GM12878 (cell line): ENCODE measurements at regions of chr3 and their contacts with region 1.

Region 1: DNA sequence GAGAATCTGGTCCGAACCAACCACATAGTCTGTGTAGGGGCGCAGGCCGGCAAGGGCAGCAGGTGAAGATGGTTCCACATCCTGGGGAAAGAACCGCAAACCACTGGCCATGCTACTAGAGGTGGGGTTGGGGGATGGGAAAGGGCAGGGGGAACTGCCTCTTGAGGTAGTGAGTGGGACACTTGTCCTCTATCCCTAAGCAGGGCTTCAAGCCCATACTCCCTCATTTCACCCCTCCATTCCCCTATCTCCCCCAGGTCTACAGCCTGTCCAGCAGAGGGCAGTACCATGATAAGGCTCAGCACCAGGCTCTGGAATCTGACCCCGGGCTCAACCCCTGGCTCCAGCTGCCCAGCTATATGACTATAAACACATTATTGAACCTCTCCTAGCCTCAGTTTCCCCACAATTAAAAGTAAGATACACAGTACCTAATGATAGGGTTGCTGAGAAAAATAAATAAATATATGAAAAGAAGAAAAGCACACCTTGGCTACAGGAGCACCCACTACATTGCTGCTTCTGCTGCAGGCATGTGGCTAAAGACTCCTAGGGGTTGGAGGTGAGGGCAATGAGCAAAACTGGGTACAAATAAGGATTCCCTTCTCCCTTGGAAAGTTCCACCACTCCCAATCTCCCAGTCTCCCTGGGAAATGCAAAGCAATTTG is 6.3 kb downstream of the GORASP1 start:
- DNase-seq: no peak
- ATAC-seq: peak; percentile 89
- H3K4me3 ChIP-seq: no peak overlapping the region
- H3K27ac ChIP-seq: no peak overlapping the region
- H3K4me1 ChIP-seq: peaks cover 5% of the 10 kb centered on the region
- H3K27me3 ChIP-seq: no peaks in the 10 kb centered on the region
- CTCF ChIP-seq: peak; percentile 72 to 84 (median 83)
- EP300 ChIP-seq: no peak
- POLR2A ChIP-seq: no peak
- RAD21 ChIP-seq: peak; percentile 85

Region 2: GRCh38 chr3:38853011-38853410 is 248.1 kb before region 1 on chr3:
- CTCF ChIA-PET with region 1: no interaction called
- POLR2A ChIA-PET with region 1: no interaction called
- RAD21 ChIA-PET with region 1: no interaction called
- SMC1A ChIA-PET with region 1: no interaction called
- in situ Hi-C with region 1: no loop called
- intact Hi-C with region 1: no loop called
- DNase-seq: no peak
- ATAC-seq: no peak
- H3K4me3 ChIP-seq: no peak overlapping the region
- H3K27ac ChIP-seq: no peak overlapping the region
- H3K4me1 ChIP-seq: no peaks in the 10 kb centered on the region
- H3K27me3 ChIP-seq: no peaks in the 10 kb centered on the region
- CTCF ChIP-seq: no peak
- EP300 ChIP-seq: no peak
- POLR2A ChIP-seq: no peak
- RAD21 ChIP-seq: no peak

Region 3: DNA sequence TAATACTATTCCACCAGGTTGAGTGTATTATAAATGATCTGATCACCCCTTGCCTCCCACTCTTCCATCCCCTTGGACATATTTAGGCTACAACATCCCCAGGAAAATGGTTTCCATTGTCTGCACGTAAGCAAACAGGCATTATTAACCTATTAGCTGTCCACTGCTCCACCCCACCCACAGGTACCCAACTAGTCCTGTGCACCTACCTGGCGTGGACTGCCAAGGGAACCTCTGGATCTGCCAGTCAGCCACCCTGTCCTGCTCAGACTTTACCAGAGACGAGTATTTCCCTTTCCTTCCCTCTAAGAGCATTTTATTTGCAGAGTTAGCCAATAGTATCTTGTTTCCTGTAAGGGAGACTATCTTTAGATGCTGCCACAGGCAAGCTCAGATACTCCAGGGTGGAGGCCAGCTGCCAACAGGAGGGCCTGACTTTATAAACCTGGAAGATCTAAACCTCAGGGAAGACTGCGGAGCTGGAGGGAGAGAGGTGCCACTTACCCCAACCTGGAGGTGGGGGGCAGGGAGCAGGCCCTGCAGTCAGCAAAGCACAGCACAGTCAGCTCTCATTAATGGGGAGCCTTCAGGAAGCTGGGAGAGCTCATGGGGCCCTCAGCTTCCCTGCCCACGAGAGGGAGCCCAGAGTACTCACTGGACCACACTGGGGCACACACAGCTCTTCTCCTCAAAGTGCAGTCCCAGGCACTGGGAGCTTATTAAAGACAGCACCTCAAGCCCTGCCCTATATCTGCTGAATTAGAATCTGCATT is 178.8 kb after region 1 on chr3 and contains the start of gene CX3CR1:
- CTCF ChIA-PET with region 1: no interaction called
- POLR2A ChIA-PET with region 1: no interaction called
- RAD21 ChIA-PET with region 1: no interaction called
- SMC1A ChIA-PET with region 1: interaction called, 3 read pairs
- in situ Hi-C with region 1: loop called (anchors 5 kb)
- intact Hi-C with region 1: no loop called
- DNase-seq: no peak
- ATAC-seq: peak; percentile 21; the same call in 1 of the 3 replicates
- H3K4me3 ChIP-seq: no peak within 1 kb of the TSS
- H3K27ac ChIP-seq: no peak within 1 kb of the TSS
- H3K4me1 ChIP-seq: peaks cover 6% of the 10 kb centered on the region
- H3K27me3 ChIP-seq: peaks cover 0 to 3% of the 10 kb centered on the region in 2 experiments; a peak in 1 of 4 replicates
- CTCF ChIP-seq: no peak
- EP300 ChIP-seq: no peak
- POLR2A ChIP-seq: no peak
- RAD21 ChIP-seq: no peak
- polyA plus RNA-seq, gene CX3CR1: 0.05 to 0.09 TPM